AG04450 (cell line): ENCODE measurements at regions of chr2 and their contacts with region 1.

Region 1: GRCh38 chr2:224927646-224928173 is 114.6 kb downstream of the DOCK10 start:
- DNase-seq: peak; percentile 60
- H3K4me3 ChIP-seq: no peak overlapping the region
- H3K27ac ChIP-seq: peak overlapping the region; percentile 86
- H3K27me3 ChIP-seq: no peaks in the 10 kb centered on the region
- CTCF ChIP-seq: no peak

Region 2: GRCh38 chr2:224412141-224413015 is 515.3 kb before region 1 on chr2:
- CTCF ChIA-PET with region 1: no interaction called
- POLR2A ChIA-PET with region 1: no interaction called
- DNase-seq: no peak
- H3K4me3 ChIP-seq: no peak overlapping the region
- H3K27ac ChIP-seq: no peak overlapping the region
- H3K27me3 ChIP-seq: no peaks in the 10 kb centered on the region
- CTCF ChIP-seq: no peak

Region 3: DNA sequence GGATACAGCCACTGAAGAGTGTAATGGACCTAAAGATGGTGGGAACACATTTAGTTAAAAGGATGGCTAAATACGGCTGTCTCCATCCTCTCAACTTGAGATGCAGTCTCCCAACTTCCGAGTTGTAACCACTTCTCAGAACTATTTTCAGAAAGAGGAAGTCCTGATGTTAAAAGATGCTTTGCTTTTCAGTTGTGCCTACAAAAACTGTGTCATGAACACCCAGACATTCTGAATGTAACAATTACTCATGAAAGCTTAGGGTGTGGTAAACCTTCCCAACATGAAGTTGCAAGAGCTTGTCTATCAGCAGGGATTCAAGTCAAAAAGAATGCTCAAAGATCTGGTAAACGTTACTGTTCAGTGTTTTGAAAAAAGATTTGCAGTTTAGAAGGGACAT is 33.4 kb before region 1 on chr2:
- CTCF ChIA-PET with region 1: no interaction called
- POLR2A ChIA-PET with region 1: interaction called, 11 read pairs
- DNase-seq: no peak
- H3K4me3 ChIP-seq: no peak overlapping the region
- H3K27ac ChIP-seq: no peak overlapping the region
- H3K27me3 ChIP-seq: no peaks in the 10 kb centered on the region
- CTCF ChIP-seq: no peak

Region 4: DNA sequence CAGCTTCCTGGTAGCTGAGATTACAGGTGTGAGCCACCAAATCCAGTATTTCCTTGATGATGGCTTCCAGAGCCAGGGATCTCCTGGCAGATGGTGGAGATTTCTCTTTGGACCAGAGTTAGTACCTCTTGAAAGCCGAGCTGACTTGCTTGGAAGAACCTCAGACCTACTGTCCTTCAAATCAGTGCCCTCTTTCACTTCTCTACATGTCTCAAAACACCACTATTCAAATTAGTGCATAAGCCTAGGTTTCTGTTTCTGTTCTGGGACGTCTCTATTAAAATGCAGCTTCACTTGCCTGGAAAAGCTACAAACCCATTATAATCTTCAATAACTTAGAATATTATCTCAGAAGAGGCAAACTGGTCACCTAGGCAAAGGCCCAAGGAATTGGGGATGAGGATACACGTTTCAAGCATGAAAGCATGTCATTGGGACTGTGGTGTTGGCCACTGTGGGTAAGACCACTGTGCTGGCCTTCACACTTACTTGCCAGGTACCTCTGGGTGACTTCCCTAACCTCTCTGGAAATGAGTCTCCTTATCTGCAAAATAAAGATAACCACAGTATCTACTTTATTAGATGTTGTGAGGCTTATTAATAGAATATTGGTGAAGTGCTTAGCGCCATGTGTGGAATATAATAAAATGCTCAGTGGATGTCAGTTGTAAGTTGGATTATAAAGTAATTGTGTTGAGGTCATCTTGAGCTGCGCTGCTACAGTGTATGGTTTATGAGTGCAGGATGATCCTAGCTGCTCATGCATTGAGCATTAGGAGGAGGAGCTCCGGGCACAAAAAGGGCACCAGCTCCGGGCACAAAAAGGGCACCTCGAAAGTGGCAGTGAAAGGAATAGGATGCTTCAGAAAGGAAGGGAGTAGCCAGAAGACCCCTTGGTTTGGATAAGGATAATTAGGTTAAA is 30.1 kb after region 1 on chr2:
- CTCF ChIA-PET with region 1: no interaction called
- POLR2A ChIA-PET with region 1: interaction called, 16 read pairs
- DNase-seq: no peak
- H3K4me3 ChIP-seq: no peak overlapping the region
- H3K27ac ChIP-seq: no peak overlapping the region
- H3K27me3 ChIP-seq: no peaks in the 10 kb centered on the region
- CTCF ChIP-seq: no peak